GM10248 (cell line): ENCODE measurements at regions of chr1 and their contacts with region 1.

Region 1: GRCh38 chr1:225554216-225554812 is 98.6 kb downstream of the ENAH start:
- DNase-seq: peak; percentile 35
- CTCF ChIP-seq: peak; percentile 49

Region 2: DNA sequence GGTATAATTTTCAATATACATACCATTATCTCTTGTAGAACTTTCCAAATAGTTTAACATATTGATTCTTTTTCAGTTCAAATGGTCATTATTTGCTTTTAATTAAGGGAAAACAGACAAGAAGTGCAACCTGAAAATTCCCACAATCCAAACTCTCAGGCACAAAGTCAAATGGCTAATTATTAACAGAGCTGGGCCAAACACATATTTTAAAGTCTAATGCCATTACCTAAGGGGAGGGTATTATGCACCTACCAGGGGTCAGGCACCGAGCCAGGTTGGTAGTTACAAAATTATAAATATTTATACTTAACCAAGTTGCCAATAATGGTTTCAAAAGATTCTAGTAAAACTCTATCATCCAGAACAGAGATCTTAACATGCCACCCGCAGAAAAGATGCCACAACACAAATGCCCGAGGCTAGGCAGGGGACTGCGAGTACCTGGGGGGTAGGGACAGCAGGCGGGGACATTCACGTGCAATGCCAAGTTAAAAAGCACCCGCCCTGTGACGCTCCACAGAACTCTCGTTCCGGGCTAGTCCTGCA is 141.4 kb before region 1 on chr1:
- CTCF ChIA-PET with region 1: no interaction called
- POLR2A ChIA-PET with region 1: no interaction called
- DNase-seq: no peak
- CTCF ChIP-seq: no peak

Region 3: GRCh38 chr1:225565847-225566246 is 11.5 kb after region 1 on chr1:
- CTCF ChIA-PET with region 1: interaction called, 11 read pairs
- POLR2A ChIA-PET with region 1: no interaction called
- DNase-seq: no peak
- CTCF ChIP-seq: no peak